AG04450 (cell line): ENCODE measurements at regions of chr10 and their contacts with region 1.

Region 1: GRCh38 chr10:90912174-90912573 is 8.7 kb downstream of the ANKRD1 start:
- DNase-seq: no peak
- H3K4me3 ChIP-seq: no peak overlapping the region
- H3K27ac ChIP-seq: no peak overlapping the region
- H3K27me3 ChIP-seq: no peaks in the 10 kb centered on the region
- CTCF ChIP-seq: no peak

Region 2: GRCh38 chr10:90494183-90494582 is 418.0 kb before region 1 on chr10:
- CTCF ChIA-PET with region 1: no interaction called
- POLR2A ChIA-PET with region 1: no interaction called
- DNase-seq: no peak
- H3K4me3 ChIP-seq: no peak overlapping the region
- H3K27ac ChIP-seq: no peak overlapping the region
- H3K27me3 ChIP-seq: no peaks in the 10 kb centered on the region
- CTCF ChIP-seq: no peak

Region 3: GRCh38 chr10:90930070-90930837 is 18.1 kb after region 1 on chr10:
- CTCF ChIA-PET with region 1: interaction called, 15 read pairs
- POLR2A ChIA-PET with region 1: interaction called, 4 read pairs
- DNase-seq: peak; percentile 42
- H3K4me3 ChIP-seq: no peak overlapping the region
- H3K27ac ChIP-seq: peak overlapping the region; percentile 89
- H3K27me3 ChIP-seq: no peaks in the 10 kb centered on the region
- CTCF ChIP-seq: no peak

Region 4: DNA sequence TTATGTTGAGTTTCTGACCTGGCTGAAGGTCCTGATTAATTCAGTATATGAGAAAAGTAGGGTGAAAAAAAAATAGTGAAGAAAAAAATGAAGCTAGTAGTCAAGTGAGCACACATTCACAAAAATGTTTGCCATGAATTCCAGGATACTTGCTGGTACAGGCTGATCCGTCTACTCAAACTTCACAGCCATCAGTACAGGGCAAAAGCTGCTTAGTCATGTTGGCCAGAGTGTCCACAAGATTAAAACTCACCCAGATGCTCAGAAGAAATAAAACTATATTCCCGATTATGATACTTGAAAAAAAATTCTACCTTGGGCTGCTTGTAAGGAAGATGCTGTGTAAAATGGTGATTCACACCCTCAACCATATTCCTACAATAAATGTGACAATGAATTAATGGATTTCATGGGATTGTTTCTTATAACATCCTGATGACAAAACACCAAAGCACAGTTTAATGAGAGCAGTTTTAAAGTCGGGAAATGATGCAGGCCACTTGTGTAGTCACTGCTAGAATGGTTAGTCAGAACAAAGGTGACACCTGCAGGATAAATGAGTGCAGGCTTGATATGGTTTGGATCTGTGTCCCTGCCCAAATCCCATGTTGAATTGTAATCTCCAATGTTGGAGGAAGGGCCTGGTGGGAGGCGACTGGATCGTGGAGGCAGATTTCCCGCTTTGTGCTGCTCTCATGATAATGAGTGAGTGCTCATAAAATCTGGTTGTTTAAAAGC is 57.9 kb after region 1 on chr10:
- CTCF ChIA-PET with region 1: interaction called, 16 read pairs
- POLR2A ChIA-PET with region 1: no interaction called
- DNase-seq: peak; percentile 18
- H3K4me3 ChIP-seq: no peak overlapping the region
- H3K27ac ChIP-seq: no peak overlapping the region
- H3K27me3 ChIP-seq: peaks cover 2% of the 10 kb centered on the region
- CTCF ChIP-seq: no peak

Region 5: GRCh38 chr10:91088300-91089140 is 176.3 kb after region 1 on chr10:
- CTCF ChIA-PET with region 1: interaction called, 12 read pairs
- POLR2A ChIA-PET with region 1: no interaction called
- DNase-seq: no peak
- H3K4me3 ChIP-seq: no peak overlapping the region
- H3K27ac ChIP-seq: no peak overlapping the region
- H3K27me3 ChIP-seq: peaks cover 2% of the 10 kb centered on the region
- CTCF ChIP-seq: peak; percentile 13; the same call in 1 of the 2 replicates